SK-N-SH (cell line): ENCODE measurements at regions of chr12 and their contacts with region 1.

Region 1: DNA sequence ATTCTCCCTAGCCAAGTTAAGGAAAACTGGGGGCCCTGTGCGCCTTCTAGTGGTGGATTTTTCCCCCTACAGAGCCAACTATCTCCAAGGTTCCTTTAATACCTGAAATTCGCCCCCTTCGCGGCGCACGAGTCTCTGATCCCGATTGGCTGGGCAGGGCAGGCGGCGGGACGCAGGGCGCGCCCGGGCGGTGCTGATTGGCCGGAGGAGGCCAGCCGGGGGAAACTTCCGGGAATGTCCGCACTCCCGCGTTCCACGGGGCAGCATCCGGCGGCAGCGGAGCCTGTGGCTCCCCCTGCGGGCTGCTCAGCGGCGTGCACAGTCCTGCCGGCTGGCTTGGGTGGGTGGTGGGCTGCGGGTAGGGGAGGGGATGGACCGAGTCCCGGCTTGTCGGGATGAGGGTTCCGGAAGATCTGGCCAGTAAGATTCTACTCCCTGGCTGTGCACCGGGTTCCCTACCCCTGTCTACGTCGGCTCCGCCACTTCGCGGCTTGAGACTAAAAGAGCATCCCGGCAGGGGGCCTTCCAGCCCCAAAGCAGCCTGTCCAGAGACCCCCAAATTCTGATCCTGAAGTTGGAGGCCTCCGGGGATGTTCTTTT is at the start of gene NABP2:
- DNase-seq: peak; percentile 98
- H3K4me3 ChIP-seq: peak within 1 kb of the TSS; percentile 67 to 97
- H3K27ac ChIP-seq: peak within 1 kb of the TSS; percentile 62 to 64
- H3K4me1 ChIP-seq: peaks cover 13 to 22% of the 10 kb centered on the region in 2 experiments; a peak in 2 of 4 replicates
- H3K27me3 ChIP-seq: no peaks in the 10 kb centered on the region
- CTCF ChIP-seq: peak; percentile 89
- EP300 ChIP-seq: no peak; a peak in 1 of 4 replicates
- RAD21 ChIP-seq: peak; percentile 56
- polyA plus RNA-seq, gene NABP2: 49.3 and 52.3 TPM in 2 replicates

Region 2: GRCh38 chr12:56206457-56207166 is 17.6 kb before region 1 on chr12:
- CTCF ChIA-PET with region 1: interaction called, 47 read pairs
- POLR2A ChIA-PET with region 1: interaction called, 23 read pairs
- DNase-seq: peak; percentile 67
- H3K4me3 ChIP-seq: no peak overlapping the region
- H3K27ac ChIP-seq: peak overlapping the region in 1 of 2 experiments; percentile 29; a peak in 1 of 4 replicates
- H3K4me1 ChIP-seq: no peaks in the 10 kb centered on the region; a peak in 1 of 4 replicates
- H3K27me3 ChIP-seq: no peaks in the 10 kb centered on the region
- CTCF ChIP-seq: peak; percentile 66
- EP300 ChIP-seq: no peak
- RAD21 ChIP-seq: peak; percentile 61